ENCODE measurements at regions of chr3 and their contacts with region 1.

Region 1: GRCh38 chr3:66423791-66424190 is 77.0 kb downstream of the LRIG1 start:
- DNase-seq: no peak
- H3K4me3 ChIP-seq: no peak overlapping the region
- H3K27me3 ChIP-seq: no peaks in the 10 kb centered on the region
- CTCF ChIP-seq: no peak

Region 2: GRCh38 chr3:65584002-65584401 is 839.8 kb before region 1 on chr3:
- CTCF ChIA-PET with region 1: no interaction called
- POLR2A ChIA-PET with region 1: interaction called, 12 read pairs
- DNase-seq: no peak
- H3K4me3 ChIP-seq: no peak overlapping the region
- H3K27me3 ChIP-seq: no peaks in the 10 kb centered on the region
- CTCF ChIP-seq: no peak